Activated CD4-positive, alpha-beta T cell treated with anti-CD3 and anti-CD28 coated beads, Interleukin-2, amount 10 ng/mL, durations not matched to agents 24 days and 14 days (primary cell): ENCODE measurements at regions of chr6 and their contacts with region 1.

Region 1: GRCh38 chr6:108896111-108896661 is 48.0 kb downstream of the ARMC2 start:
- DNase-seq: peak; percentile 74
- H3K4me3 Mint-ChIP-seq: peak overlapping the region; percentile 66
- H3K27ac Mint-ChIP-seq: peak overlapping the region; percentile 92
- H3K4me1 Mint-ChIP-seq: peaks cover 37% of the 10 kb centered on the region
- H3K27me3 Mint-ChIP-seq: peaks cover 4% of the 10 kb centered on the region

Region 2: DNA sequence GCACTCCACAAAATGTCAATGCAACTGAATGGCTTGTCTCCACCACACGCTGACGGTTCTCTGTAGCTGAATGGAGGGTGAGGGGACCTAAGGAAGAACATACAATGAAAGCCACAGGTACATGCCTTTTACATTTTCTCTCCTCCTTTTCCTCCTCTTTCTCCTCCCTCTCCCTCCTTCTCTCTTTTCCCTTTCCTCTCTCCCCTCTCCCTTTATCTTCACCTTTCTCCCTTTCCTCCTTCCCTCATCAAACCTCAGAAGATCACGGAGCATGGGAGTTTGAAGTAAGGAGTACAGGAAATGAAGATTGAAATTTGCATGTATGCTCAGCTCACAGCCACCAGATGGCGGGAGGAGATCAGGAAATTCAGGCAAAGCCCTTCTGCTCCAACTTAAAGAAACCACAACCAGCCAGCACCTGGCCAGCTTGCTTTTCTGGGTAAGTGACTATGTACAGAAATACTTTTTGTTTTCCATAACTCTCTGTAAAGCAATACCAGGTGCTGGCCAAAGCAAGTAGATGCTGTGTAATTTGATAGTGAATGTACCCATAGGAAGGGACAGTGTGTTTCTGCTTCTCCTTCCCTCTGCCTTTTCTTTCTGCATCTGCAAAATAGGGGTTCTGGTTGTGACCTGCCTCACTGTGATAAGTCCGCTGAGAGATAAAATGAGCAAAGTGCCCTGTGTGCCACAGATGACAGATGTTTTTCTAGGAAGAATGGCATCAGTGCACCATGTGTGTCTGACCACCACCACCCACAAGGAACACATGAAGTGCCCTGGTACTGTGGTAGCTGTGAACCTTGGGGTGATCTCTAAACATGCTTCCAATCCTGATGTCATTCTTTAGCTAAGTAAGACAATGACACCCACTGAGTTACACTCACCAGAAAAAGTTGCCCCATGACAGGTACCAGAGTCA is 354.1 kb before region 1 on chr6:
- intact Hi-C with region 1: loop called (anchors 1 kb)
- DNase-seq: peak; percentile 88
- H3K4me3 Mint-ChIP-seq: peak overlapping the region; percentile 22
- H3K27ac Mint-ChIP-seq: no peak overlapping the region
- H3K4me1 Mint-ChIP-seq: peaks cover 9% of the 10 kb centered on the region
- H3K27me3 Mint-ChIP-seq: peaks cover 45% of the 10 kb centered on the region

Region 3: DNA sequence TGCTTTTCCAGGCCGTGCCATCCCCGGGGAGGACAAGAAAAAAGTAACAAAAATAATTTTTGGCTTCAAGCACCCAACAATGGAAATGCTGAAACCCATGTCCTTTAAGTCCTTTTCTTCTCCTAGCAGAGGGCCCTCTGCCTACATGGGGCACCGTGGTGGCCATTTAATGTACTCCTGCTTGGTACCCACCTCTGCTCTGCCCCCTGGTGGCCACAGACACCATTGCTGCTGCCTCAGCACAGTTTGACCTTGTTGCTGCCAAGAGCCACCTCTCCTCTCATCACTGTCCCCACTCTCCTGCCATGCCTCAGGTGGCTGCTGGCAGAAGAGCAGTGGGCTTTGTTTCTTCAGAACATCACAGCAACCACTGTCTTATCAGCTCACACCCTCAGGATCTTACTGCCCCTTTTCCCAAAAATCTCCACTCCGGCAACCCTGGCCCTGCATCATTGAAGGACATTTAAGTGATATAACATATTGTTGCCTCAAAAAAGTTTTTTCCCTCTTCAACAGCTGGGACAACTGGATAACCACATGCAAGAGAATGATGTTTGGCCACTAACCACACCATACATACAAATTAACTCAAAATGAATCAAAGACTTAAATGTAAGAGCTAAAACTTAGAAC is 60.9 kb before region 1 on chr6:
- intact Hi-C with region 1: loop called (anchors 1 kb)
- DNase-seq: peak; percentile 94
- H3K4me3 Mint-ChIP-seq: no peak overlapping the region
- H3K27ac Mint-ChIP-seq: peak overlapping the region; percentile 14
- H3K4me1 Mint-ChIP-seq: peaks cover 26% of the 10 kb centered on the region
- H3K27me3 Mint-ChIP-seq: peaks cover 18% of the 10 kb centered on the region

Region 4: GRCh38 chr6:108874470-108875160 is 21.6 kb before region 1 on chr6:
- intact Hi-C with region 1: loop called (anchors 1 kb)
- DNase-seq: peak; percentile 87
- H3K4me3 Mint-ChIP-seq: peak overlapping the region; percentile 68
- H3K27ac Mint-ChIP-seq: peak overlapping the region; percentile 91
- H3K4me1 Mint-ChIP-seq: peaks cover 67% of the 10 kb centered on the region
- H3K27me3 Mint-ChIP-seq: peaks cover 20% of the 10 kb centered on the region

Region 5: GRCh38 chr6:108921547-108922361 is 25.6 kb after region 1 on chr6:
- intact Hi-C with region 1: loop called (anchors 2 kb)
- DNase-seq: peak; percentile 68
- H3K4me3 Mint-ChIP-seq: no peak overlapping the region
- H3K27ac Mint-ChIP-seq: peak overlapping the region; percentile 18
- H3K4me1 Mint-ChIP-seq: peaks cover 24% of the 10 kb centered on the region
- H3K27me3 Mint-ChIP-seq: peaks cover 40% of the 10 kb centered on the region

Region 6: DNA sequence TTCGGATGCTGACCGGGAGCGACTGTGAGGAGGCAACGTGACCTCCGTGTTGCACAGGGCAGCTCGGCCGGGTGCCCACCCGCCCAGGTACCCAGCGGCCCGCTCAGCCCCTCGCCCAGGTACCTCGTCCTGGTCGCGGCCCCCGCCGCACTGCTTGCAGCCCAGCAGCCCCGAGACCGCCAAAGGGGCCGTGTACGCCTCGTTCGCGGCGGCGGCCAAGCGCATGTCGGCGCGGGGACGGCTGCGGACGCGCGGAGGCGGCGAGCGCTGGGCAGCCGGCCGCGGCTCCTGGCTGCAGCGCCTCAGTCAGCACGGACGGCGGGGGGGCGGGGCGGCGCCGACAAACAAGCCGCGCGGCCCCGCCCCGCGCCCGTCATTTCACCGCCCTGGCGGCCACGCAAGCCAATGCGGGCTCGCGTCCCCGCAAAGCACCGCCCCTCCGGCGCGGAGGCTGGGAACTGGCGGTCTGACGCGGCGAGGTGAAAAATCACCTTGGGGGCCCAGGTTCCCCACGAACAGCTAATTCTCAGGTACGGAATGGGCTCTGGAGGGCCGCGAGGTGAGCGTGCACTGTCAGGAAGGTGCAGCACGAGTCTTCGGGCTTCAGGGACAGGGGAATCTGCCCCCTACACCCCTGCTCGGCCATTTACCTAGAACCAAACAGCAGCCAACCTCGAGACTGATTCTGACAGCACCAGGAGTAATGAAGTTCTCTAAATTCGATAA is 113.2 kb after region 1 on chr6:
- intact Hi-C with region 1: loop called (anchors 1 kb)
- DNase-seq: peak; percentile 98
- H3K4me3 Mint-ChIP-seq: peak overlapping the region; percentile 93
- H3K27ac Mint-ChIP-seq: peak overlapping the region; percentile 92
- H3K4me1 Mint-ChIP-seq: peaks cover 35% of the 10 kb centered on the region
- H3K27me3 Mint-ChIP-seq: peaks cover 2% of the 10 kb centered on the region

Region 7: DNA sequence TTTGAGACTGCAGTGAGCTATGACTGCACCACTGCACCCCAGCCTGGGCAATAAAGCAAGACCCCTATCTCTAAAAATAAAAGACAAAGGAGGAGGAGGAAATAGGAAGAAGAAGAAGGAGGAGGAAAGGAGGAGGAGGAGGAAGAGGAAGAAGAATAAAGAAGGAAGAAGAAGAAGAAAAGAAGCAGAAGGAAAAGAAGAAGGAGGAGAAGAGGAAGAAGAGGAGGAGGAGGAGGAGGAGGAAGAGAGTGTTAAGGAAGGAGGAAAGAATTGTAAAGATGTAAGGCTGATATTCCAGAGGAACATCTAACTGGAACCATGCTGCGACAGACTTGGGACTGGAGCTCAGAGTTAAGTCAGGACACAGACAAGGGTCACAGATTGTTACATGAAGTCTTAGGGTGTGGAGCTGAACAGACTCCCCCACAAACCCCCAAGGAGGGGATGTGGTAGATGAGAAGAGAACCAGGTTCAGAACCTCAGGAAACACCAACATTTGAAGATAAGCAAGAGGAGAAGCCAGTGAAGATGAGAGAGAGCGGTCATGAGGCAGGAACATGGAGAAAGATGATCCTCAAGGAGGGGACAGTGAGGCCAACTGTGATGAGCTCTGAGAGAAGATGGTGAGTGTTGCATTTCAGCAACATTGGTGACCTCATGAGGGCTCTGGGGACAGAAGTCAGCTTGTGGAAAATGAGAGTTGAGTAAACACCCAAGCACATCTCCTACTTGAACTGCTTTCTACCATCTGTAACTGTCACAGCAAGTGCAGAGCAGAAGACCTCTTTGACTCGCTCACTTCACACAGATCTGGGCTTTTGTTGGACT is 367.9 kb after region 1 on chr6:
- intact Hi-C with region 1: no loop called
- DNase-seq: peak; percentile 39
- H3K4me3 Mint-ChIP-seq: no peak overlapping the region
- H3K27ac Mint-ChIP-seq: no peak overlapping the region
- H3K4me1 Mint-ChIP-seq: no peaks in the 10 kb centered on the region
- H3K27me3 Mint-ChIP-seq: peaks cover 3% of the 10 kb centered on the region